Activated B cell treated with CpG ODN at 0.5 μM for 24 hours (primary cell): ENCODE measurements at regions of chr6 and their contacts with region 1.

Region 1: GRCh38 chr6:85678602-85679444 is 36.1 kb upstream of the SYNCRIP start:
- DNase-seq: peak; percentile 96
- ATAC-seq: peak; percentile 87
- H3K4me3 Mint-ChIP-seq: peak overlapping the region; percentile 99
- H3K27ac Mint-ChIP-seq: peak overlapping the region; percentile 98
- H3K4me1 Mint-ChIP-seq: peaks cover 48% of the 10 kb centered on the region
- H3K27me3 Mint-ChIP-seq: no peaks in the 10 kb centered on the region
- CTCF ChIP-seq: no peak

Region 2: GRCh38 chr6:84227434-84228197 is 1451.2 kb before region 1 on chr6 and contains the start of gene CEP162:
- CTCF ChIA-PET with region 1: no interaction called
- POLR2A ChIA-PET with region 1: no interaction called
- intact Hi-C with region 1: loop called (anchors 5 kb)
- DNase-seq: peak; percentile 82
- ATAC-seq: peak; percentile 92
- H3K4me3 Mint-ChIP-seq: peak within 1 kb of the TSS; percentile 99
- H3K27ac Mint-ChIP-seq: peak within 1 kb of the TSS; percentile 95
- H3K4me1 Mint-ChIP-seq: peaks cover 19% of the 10 kb centered on the region
- H3K27me3 Mint-ChIP-seq: peaks cover 13% of the 10 kb centered on the region
- CTCF ChIP-seq: no peak
- total RNA-seq, gene CEP162: 7.9 and 13.8 TPM in 2 replicates

Region 3: DNA sequence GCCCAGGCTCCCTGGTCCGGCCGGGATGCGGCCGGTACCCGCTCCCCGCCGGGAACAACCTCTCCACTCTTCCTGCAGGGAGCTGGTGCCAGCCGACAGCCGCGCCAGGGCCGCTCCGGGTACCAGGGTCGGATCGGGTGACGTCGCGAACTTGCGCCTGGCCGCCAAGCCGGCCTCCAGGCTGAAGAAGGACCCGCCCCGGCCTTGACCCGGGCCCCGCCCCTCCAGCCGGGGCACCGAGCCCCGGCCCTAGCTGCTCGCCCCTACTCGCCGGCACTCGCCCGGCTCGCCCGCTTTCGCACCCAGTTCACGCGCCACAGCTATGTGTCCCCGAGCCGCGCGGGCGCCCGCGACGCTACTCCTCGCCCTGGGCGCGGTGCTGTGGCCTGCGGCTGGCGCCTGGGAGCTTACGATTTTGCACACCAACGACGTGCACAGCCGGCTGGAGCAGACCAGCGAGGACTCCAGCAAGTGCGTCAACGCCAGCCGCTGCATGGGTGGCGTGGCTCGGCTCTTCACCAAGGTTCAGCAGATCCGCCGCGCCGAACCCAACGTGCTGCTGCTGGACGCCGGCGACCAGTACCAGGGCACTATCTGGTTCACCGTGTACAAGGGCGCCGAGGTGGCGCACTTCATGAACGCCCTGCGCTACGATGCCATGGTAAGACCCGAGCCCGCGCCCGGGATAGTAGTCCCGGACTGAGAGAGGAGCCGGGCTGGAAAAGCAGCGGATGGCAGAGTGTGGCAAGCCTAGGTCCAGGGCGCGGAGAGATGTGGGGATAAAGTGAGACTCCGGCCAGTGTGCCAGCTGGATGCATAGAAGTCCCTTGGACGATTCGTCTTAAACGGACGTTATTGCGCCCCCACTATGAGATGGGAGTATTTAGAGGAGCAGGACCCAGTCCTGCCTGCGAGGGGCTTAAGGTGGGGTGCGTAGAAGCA is 228.7 kb before region 1 on chr6 and contains the start of gene NT5E:
- CTCF ChIA-PET with region 1: no interaction called
- POLR2A ChIA-PET with region 1: interaction called, 20 read pairs
- intact Hi-C with region 1: loop called (anchors 2 kb)
- DNase-seq: peak; percentile 67
- ATAC-seq: peak; percentile 77
- H3K4me3 Mint-ChIP-seq: peak within 1 kb of the TSS; percentile 97
- H3K27ac Mint-ChIP-seq: peak within 1 kb of the TSS; percentile 94
- H3K4me1 Mint-ChIP-seq: peaks cover 68% of the 10 kb centered on the region
- H3K27me3 Mint-ChIP-seq: peaks cover 10% of the 10 kb centered on the region
- CTCF ChIP-seq: no peak
- total RNA-seq, gene NT5E: 5.8 and 6.6 TPM in 2 replicates

Region 4: GRCh38 chr6:85593438-85594196 is 85.2 kb before region 1 on chr6 and contains the start of gene SNX14:
- CTCF ChIA-PET with region 1: interaction called, 6 read pairs
- POLR2A ChIA-PET with region 1: interaction called, 78 read pairs
- intact Hi-C with region 1: loop called (anchors 1 kb)
- DNase-seq: peak; percentile 82
- ATAC-seq: peak; percentile 87
- H3K4me3 Mint-ChIP-seq: peak within 1 kb of the TSS; percentile 99
- H3K27ac Mint-ChIP-seq: peak within 1 kb of the TSS; percentile 98
- H3K4me1 Mint-ChIP-seq: peaks cover 47% of the 10 kb centered on the region
- H3K27me3 Mint-ChIP-seq: no peaks in the 10 kb centered on the region
- CTCF ChIP-seq: no peak
- total RNA-seq, gene SNX14: 61.6 and 70.8 TPM in 2 replicates

Region 5: DNA sequence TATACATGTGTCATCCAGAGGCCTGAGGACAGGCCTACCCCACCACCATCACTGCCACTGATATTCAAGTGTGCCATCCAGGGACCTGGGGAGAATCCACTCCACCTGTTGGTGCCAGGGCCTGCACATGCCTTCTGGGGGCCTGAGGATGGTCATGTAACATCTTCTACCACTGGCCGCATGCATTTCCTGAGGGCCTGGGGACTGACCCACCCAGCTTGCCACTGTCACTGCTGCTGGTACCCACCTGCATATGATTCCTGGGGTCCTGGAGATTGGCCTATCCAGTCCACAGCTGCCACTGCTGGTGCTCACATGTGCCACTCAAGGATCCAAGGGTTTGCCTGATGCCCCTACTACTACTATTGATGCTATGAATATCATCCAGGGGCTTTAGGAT is 148.2 kb after region 1 on chr6:
- CTCF ChIA-PET with region 1: no interaction called
- POLR2A ChIA-PET with region 1: no interaction called
- intact Hi-C with region 1: no loop called
- DNase-seq: no peak
- ATAC-seq: no peak
- H3K4me3 Mint-ChIP-seq: no peak overlapping the region
- H3K27ac Mint-ChIP-seq: no peak overlapping the region
- H3K4me1 Mint-ChIP-seq: no peaks in the 10 kb centered on the region
- H3K27me3 Mint-ChIP-seq: no peaks in the 10 kb centered on the region
- CTCF ChIP-seq: no peak

Region 6: DNA sequence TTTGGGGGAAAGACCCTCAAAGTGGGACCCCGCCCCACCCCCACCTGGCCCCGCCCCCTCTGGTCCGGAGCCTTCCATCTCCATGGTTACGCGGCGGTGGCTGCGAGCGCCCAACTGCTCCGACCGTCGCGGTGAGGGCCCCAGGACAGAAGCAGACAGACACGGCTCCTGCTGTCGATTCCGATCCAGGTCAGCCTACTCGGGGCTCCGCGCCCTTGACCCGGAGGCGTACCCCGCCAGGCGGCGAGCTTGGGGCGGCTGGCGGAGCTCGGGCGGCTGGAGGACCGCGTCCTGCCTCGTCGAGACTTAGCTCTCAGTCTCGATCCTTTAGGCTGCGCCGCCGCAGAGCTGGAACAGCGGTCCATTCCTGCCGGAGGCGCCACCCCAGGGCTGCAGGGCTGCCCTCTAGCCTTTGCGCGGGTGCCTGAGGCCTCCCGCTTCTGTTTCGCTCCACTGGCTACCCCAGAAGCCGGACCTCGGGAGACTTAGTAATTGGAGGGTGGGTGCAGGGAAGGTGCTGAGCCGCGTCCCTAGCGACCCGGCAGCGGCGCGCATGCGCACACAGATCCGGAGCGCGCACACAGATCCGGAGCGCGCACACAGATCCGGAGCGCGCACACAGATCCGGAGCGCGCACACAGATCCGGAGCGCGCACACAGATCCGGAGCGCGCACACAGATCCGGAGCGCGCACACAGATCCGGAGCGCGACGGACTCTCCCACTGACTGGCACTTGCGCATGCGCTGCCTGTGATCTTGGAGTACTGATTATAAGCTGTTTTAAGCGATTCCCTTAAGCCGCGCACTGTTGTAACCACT is 1729.3 kb after region 1 on chr6 and contains the start of gene CFAP206:
- CTCF ChIA-PET with region 1: no interaction called
- POLR2A ChIA-PET with region 1: no interaction called
- intact Hi-C with region 1: loop called (anchors 2 kb)
- DNase-seq: peak; percentile 80
- ATAC-seq: peak; percentile 80
- H3K4me3 Mint-ChIP-seq: peak within 1 kb of the TSS; percentile 87
- H3K27ac Mint-ChIP-seq: peak within 1 kb of the TSS; percentile 79
- H3K4me1 Mint-ChIP-seq: peaks cover 9% of the 10 kb centered on the region
- H3K27me3 Mint-ChIP-seq: peaks cover 8% of the 10 kb centered on the region
- CTCF ChIP-seq: no peak
- total RNA-seq, gene CFAP206: 0.09 TPM in 1 of 2 replicates, not detected in the other